ENCODE measurements at regions of chr20 and their contacts with region 1.

Region 1: DNA sequence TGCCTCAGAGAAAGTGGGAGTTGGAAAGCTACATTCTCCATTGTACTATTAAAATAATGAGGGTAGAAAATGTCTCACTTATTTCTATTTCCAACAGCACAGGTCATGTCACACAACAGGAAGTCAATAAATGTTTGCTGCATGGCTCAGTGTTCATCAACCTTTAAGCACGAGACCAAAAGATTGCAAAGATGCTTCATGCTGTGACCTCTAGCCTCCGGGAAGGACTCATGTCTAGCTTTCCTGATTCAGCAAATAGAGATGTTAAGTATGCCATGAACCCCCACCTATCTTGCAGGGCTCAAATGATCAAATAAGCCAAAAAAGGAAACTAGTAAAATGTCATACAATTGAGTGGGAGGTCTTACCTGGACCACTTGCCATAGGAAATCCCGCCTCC is 57.4 kb downstream of the NCOA6 start:
- DNase-seq: no peak

Region 2: DNA sequence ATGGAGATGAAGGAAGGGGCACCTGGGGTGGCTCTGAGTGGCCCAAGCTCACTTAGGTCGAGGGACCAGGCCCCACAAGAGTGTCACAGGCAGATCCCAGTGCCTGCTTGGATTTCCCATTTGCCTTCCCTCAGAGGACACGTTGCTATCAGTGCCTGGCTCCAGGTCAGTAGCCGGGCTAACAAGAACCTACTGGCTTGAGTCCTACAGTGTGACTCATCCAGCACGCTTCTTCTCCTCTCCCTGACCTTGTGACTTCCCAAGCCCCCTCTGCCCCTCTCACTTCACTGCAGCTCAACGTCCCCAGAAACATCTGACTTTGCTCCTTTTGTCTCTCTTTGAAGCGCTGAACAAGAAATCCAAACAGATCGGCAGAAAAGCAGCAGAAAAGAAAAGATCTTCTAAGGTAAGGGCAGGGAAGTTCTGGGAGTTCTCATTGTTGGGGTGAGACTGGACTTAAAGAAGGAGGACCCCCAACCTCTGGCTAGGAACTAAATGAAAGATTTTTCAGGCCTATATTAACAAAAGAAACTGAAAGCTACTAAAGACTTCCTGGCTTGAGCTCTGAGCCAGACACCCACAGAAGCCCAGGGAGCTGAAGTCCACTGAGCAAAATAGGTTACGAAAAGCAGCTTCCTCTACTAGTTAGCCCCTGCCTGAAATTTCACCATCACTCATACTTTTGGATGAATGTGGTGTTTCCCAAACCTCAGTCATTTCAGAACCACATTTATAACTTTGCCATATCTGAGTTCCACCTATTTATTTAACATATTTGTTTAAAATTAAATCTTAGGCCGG is 505.4 kb before region 1 on chr20:
- intact Hi-C with region 1: no loop called
- DNase-seq: no peak

Region 3: GRCh38 chr20:34579191-34579978 is 188.7 kb before region 1 on chr20:
- intact Hi-C with region 1: loop called (anchors 1 kb)
- DNase-seq: peak; percentile 66 to 98 (median 84)

Region 4: GRCh38 chr20:34709831-34710567 is 58.1 kb before region 1 on chr20:
- intact Hi-C with region 1: loop called (anchors 2 kb)
- DNase-seq: peak; percentile 35 to 96 (median 79)

Measured in posterior cingulate gyrus (tissue), 11 donors.